SK-N-SH (cell line): ENCODE measurements at regions of chrX and their contacts with region 1.

Region 1: GRCh38 chrX:151753313-151754041 is 18.9 kb downstream of the CNGA2 start:
- DNase-seq: peak; percentile 64
- H3K4me3 ChIP-seq: peak overlapping the region in 1 of 2 experiments; percentile 13; a peak in 1 of 4 replicates
- H3K27ac ChIP-seq: no peak overlapping the region
- H3K4me1 ChIP-seq: no peaks in the 10 kb centered on the region
- H3K27me3 ChIP-seq: peaks cover 35% of the 10 kb centered on the region; the same call in 1 of the 2 replicates
- CTCF ChIP-seq: peak; percentile 86
- EP300 ChIP-seq: no peak
- RAD21 ChIP-seq: peak; percentile 74

Region 2: GRCh38 chrX:151736685-151737084 is 16.8 kb before region 1 on chrX:
- CTCF ChIA-PET with region 1: interaction called, 13 read pairs
- POLR2A ChIA-PET with region 1: no interaction called
- DNase-seq: no peak
- H3K4me3 ChIP-seq: no peak overlapping the region
- H3K27ac ChIP-seq: no peak overlapping the region
- H3K4me1 ChIP-seq: no peaks in the 10 kb centered on the region
- H3K27me3 ChIP-seq: peaks cover 33% of the 10 kb centered on the region
- CTCF ChIP-seq: no peak
- EP300 ChIP-seq: no peak
- RAD21 ChIP-seq: no peak

Region 3: DNA sequence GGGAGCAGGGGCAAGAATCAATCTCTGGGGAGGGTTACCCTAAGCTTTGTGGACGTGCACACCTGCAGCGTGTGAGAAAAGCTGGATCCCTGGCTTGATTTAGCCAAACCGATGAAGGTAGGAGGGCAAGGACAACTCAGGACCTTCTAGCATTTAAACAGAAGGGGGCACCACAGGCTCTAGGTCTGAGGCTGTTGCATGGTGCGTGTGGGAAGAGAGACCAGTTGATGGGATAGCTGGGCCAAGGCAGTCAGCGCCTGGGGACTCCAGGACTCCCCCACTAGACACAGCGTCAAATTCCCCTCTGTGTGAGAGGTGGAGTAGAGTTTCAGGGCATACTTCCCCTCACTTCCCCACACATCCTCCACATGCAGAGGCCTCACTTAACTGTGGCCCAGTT is 888.5 kb after region 1 on chrX:
- CTCF ChIA-PET with region 1: interaction called, 15 read pairs
- POLR2A ChIA-PET with region 1: no interaction called
- DNase-seq: peak; percentile 46
- H3K4me3 ChIP-seq: no peak overlapping the region
- H3K27ac ChIP-seq: no peak overlapping the region
- H3K4me1 ChIP-seq: no peaks in the 10 kb centered on the region; a peak in 1 of 4 replicates
- H3K27me3 ChIP-seq: no peaks in the 10 kb centered on the region; the same call in 1 of the 2 replicates
- CTCF ChIP-seq: peak; percentile 42
- EP300 ChIP-seq: no peak
- RAD21 ChIP-seq: peak; percentile 61

Region 4: GRCh38 chrX:152821145-152821765 is 1067.8 kb after region 1 on chrX:
- CTCF ChIA-PET with region 1: interaction called, 10 read pairs
- POLR2A ChIA-PET with region 1: no interaction called
- DNase-seq: peak; percentile 49
- H3K4me3 ChIP-seq: no peak overlapping the region
- H3K27ac ChIP-seq: no peak overlapping the region
- H3K4me1 ChIP-seq: no peaks in the 10 kb centered on the region; a peak in 1 of 4 replicates
- H3K27me3 ChIP-seq: no peaks in the 10 kb centered on the region
- CTCF ChIP-seq: peak; percentile 69
- EP300 ChIP-seq: no peak
- RAD21 ChIP-seq: peak; percentile 75